ENCODE measurements at regions of chr4 and their contacts with region 1.

Region 1: DNA sequence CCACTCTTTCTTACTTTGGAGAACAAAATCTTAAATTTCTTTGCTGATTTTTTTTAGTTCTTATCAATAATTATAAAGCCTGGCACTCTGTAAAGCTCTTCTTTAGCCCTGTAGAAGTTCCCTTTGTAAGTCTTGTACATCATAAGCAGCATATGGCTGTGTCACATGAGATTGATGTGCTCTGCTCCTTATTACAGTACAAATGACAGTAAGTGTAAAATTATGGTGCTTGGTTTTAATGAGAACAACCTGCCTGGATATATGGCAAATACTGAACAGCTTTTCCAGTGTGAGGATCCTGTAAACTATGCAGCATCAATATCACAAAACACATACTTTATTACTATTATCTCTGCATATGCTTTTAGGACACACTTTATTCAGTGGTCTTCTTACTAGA is 145.9 kb upstream of the GNPDA2 start:
- DNase-seq: no peak
- ATAC-seq: no peak

Region 2: GRCh38 chr4:44861756-44862155 is 10.5 kb before region 1 on chr4:
- intact Hi-C with region 1: loop called (anchors 1 kb)
- DNase-seq: no peak
- ATAC-seq: no peak

Region 3: DNA sequence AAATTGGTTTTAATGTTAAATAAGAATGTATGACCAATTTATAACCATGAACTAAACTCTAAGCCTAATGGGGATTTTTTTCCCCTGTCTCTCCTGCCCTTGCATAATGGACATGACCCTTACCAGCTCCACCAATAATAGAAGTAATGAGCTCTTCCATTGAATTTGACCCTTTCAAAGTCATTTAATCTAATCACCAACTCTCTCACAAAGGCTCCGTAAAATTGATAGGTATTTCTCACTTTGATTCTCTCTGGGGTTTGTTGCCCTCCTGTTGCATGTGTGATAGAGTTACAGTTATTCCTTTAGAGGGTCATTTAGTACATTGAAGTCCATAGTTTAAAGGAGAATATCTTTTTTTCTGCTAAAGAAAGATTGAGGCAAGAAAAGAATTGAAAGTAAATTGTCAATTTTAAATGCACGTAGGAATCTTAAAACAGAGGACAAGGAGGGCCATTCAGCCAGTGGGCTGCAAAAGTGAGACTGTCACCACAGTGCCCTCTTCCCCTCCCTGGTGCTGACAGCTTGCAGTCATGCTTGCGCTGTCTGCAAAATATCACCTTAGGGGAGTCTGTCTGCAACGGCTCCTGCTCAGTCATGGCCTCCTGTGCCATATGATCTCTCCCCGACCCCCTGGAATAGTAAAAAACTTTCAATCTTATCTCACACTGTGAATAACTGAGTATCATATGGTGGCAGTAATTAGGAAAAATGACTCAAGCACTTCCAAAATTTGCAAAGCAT is 161.6 kb after region 1 on chr4:
- intact Hi-C with region 1: no loop called
- DNase-seq: no peak
- ATAC-seq: no peak